Prostate gland (tissue), 2 donors: ENCODE measurements at regions of chr13 and their contacts with region 1.

Region 1: GRCh38 chr13:31909864-31910551 is 121.6 kb upstream of the FRY start:
- DNase-seq: peak; percentile 47
- H3K4me3 ChIP-seq: no peak overlapping the region
- H3K27ac ChIP-seq: no peak overlapping the region
- H3K4me1 ChIP-seq: no peaks in the 10 kb centered on the region
- H3K27me3 ChIP-seq: no peaks in the 10 kb centered on the region
- CTCF ChIP-seq: peak; percentile 67 to 88 (median 84)
- POLR2A ChIP-seq: no peak

Region 2: GRCh38 chr13:31476266-31476665 is 433.7 kb before region 1 on chr13:
- intact Hi-C with region 1: no loop called
- DNase-seq: no peak
- H3K4me3 ChIP-seq: no peak overlapping the region
- H3K27ac ChIP-seq: no peak overlapping the region
- H3K4me1 ChIP-seq: no peaks in the 10 kb centered on the region
- H3K27me3 ChIP-seq: no peaks in the 10 kb centered on the region
- CTCF ChIP-seq: no peak
- POLR2A ChIP-seq: no peak

Region 3: GRCh38 chr13:32010136-32010535 is 100.1 kb after region 1 on chr13:
- intact Hi-C with region 1: loop called (anchors 5 kb)
- DNase-seq: no peak
- H3K4me3 ChIP-seq: no peak overlapping the region
- H3K27ac ChIP-seq: no peak overlapping the region
- H3K4me1 ChIP-seq: no peaks in the 10 kb centered on the region
- H3K27me3 ChIP-seq: no peaks in the 10 kb centered on the region
- CTCF ChIP-seq: no peak
- POLR2A ChIP-seq: no peak

Region 4: DNA sequence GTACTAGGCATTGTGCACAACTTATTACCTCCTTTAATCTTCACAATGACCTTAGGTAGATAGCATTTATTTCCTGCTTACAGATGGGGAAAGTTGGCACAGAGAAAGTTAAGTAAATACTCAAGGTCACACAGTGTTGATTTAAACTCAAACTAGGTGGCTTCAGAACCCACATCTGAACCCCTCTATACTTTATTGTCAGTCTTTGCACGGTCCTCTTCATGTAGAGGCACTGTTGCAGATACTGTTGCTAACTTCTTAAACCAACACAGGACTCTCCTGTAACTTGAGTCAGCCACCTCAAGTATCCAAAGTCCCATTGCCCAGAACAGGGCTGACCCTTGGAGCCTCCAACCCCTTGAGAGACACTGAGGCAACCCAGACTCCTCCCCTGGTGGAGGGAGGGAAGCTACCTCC is 170.3 kb after region 1 on chr13:
- intact Hi-C with region 1: no loop called
- DNase-seq: no peak
- H3K4me3 ChIP-seq: no peak overlapping the region
- H3K27ac ChIP-seq: no peak overlapping the region
- H3K4me1 ChIP-seq: no peaks in the 10 kb centered on the region
- H3K27me3 ChIP-seq: no peaks in the 10 kb centered on the region
- CTCF ChIP-seq: no peak
- POLR2A ChIP-seq: no peak

Region 5: DNA sequence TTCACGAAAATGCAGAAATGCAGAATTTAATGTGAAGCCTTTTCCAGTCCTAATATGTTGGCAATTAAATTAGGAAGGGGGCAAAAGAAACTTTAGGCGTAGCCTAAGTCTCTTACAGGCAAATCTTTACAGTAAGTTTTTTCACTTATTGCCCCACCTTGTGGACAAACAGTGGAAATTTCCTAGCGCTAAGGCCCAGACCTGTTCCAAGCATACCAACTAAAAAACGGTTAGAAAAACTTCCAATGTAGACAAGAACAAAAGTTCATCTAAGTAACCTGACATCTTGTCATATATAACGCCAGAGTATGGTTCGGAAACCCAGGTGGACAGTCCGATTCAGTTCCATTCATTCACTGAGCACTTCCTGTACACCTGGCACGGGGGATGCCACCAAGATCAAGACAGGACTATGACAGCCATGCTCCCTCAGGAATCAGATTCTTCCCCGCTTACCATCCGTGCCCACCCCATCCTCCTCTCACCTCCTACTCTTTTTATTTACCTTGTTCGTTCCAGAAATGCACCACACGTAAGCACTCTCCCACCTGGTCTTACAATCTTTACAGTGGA is 400.2 kb after region 1 on chr13:
- intact Hi-C with region 1: loop called (anchors 5 kb)
- DNase-seq: no peak
- H3K4me3 ChIP-seq: no peak overlapping the region
- H3K27ac ChIP-seq: no peak overlapping the region
- H3K4me1 ChIP-seq: no peaks in the 10 kb centered on the region
- H3K27me3 ChIP-seq: no peaks in the 10 kb centered on the region
- CTCF ChIP-seq: peak; percentile 62 to 77 (median 73)
- POLR2A ChIP-seq: no peak

Region 6: DNA sequence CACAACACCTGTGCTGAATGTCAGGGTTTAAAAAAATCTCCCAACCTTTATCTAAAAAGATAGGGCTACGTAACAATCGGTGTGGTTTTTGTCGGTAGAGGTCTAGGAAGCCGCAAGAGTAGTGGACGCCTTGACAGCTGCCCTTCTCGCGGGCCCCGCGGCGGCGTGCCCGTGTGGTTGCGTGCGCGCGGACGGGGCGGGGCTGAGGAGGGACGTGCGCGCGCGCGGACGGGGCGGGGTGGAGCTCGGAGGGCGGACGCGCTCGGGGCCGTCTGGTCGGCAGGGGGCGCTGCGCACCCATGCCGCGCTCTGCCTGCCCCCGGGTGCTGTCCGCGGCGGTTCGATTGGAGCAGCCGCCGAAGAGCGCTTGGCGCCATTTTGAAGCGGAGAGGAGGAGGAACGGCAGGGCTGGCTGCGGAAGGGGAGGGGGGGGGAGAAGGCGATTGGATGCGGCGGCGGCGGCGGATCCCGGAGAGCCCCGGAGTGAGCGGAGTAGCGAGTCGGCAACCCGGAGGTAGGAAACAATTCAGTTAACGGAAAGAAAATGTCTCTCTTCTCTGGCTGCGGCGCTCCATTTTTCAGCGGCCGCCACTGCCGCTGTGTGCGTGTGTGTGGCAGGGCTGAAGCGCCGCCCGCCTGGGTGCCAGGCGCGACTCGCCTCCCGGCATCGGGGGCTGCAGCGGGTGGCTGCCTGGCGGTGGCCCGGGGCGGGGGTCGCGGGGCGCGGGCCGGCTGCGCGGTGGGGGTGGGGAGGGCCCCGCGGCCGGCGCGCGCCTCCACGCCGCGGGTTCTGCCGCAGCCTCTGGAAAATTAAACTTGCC is 676.3 kb after region 1 on chr13 and contains the start of gene PDS5B:
- intact Hi-C with region 1: loop called (anchors 10 kb)
- DNase-seq: peak; percentile 95
- H3K4me3 ChIP-seq: peak within 1 kb of the TSS; percentile 76 to 85
- H3K27ac ChIP-seq: peak within 1 kb of the TSS; percentile 95 to 97
- H3K4me1 ChIP-seq: no peaks in the 10 kb centered on the region
- H3K27me3 ChIP-seq: no peaks in the 10 kb centered on the region
- CTCF ChIP-seq: peak; percentile 95 to 99 (median 98)
- POLR2A ChIP-seq: peak; percentile 66
- total RNA-seq, gene PDS5B: 37.0 to 63.3 TPM